CD14-positive monocyte (primary cell): ENCODE measurements at regions of chr2 and their contacts with region 1.

Region 1: GRCh38 chr2:27370026-27370815 is at the starts of genes EIF2B4 and SNX17:
- DNase-seq: peak; percentile 98 to 99 (median 99)
- H3K4me3 ChIP-seq: peak within 1 kb of the TSS; percentile 74 to 96 (median 83)
- H3K4me3 Mint-ChIP-seq: peak within 1 kb of the TSS; percentile 98 to 99
- H3K27ac ChIP-seq: peak within 1 kb of the TSS; percentile 93 to 96
- H3K27ac Mint-ChIP-seq: peak within 1 kb of the TSS; percentile 98 to 99 (median 99)
- H3K4me1 ChIP-seq: peaks cover 32 to 36% of the 10 kb centered on the region in 2 donors
- H3K4me1 Mint-ChIP-seq: peaks cover 36% of the 10 kb centered on the region
- H3K27me3 ChIP-seq: no peaks in the 10 kb centered on the region
- H3K27me3 Mint-ChIP-seq: no peaks in the 10 kb centered on the region
- CTCF ChIP-seq: peak; percentile 75
- polyA plus RNA-seq, gene EIF2B4: 29.5 to 42.3 (median 39.3) TPM
- polyA plus RNA-seq, gene SNX17: 86.6 to 338 (median 291) TPM

Region 2: DNA sequence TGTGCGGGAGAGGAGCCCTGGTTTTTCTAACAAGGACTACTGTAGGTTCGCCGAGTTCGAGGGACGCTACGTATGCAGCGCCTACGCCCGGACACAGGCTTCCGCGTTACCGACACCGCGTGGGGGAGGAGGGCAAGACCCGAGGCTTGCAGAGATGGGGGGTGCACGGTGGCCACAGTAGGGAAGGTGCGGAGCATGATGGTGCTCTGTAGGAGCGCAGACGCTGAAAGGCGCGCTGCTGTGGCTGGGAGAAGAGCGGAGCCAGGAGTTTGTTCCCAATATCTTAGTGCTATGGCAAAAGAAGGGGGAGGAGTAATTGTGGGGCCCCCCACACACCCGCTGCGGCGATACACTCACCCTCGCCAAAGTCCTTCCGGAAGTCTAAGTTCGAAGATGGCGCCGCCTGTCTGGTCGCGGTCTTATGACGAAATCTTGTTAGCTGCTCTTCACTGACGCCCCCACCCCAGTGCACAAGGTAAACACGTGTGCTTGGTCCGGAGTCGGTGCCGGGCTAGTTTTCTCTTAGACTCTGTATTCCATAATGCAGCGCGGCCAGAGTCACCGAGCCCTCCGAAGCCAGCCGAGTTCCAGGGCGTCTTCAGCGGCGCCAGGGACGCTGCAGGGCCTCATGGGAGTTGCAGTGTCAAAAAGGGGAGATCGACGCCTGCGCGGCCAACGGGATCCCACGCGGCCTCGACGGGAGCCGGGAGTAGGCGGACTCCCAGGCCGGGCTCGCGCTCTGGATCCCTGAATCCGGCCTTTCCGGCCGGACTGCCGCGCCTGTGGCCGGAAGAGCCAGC is 13.6 kb before region 1 on chr2 and contains the start of gene GTF3C2:
- intact Hi-C with region 1: loop called (anchors 1 to 2 kb)
- DNase-seq: peak; percentile 93 to 97 (median 94)
- H3K4me3 ChIP-seq: peak within 1 kb of the TSS; percentile 76 to 93 (median 90)
- H3K4me3 Mint-ChIP-seq: peak within 1 kb of the TSS; percentile 97 to 99
- H3K27ac ChIP-seq: peak within 1 kb of the TSS; percentile 90 to 95
- H3K27ac Mint-ChIP-seq: peak within 1 kb of the TSS; percentile 98 to 100 (median 99)
- H3K4me1 ChIP-seq: peaks cover 16 to 28% of the 10 kb centered on the region in 2 donors
- H3K4me1 Mint-ChIP-seq: peaks cover 37% of the 10 kb centered on the region
- H3K27me3 ChIP-seq: no peaks in the 10 kb centered on the region
- H3K27me3 Mint-ChIP-seq: no peaks in the 10 kb centered on the region
- CTCF ChIP-seq: no peak
- polyA plus RNA-seq, gene GTF3C2: 34.4 to 70.8 (median 41.7) TPM

Region 3: GRCh38 chr2:27380626-27381545 is 10.7 kb after region 1 on chr2 and contains the start of gene ZNF513:
- intact Hi-C with region 1: loop called (anchors 1 kb)
- DNase-seq: peak; percentile 94 to 95 (median 94)
- H3K4me3 ChIP-seq: peak within 1 kb of the TSS; percentile 67 to 78 (median 68)
- H3K4me3 Mint-ChIP-seq: peak within 1 kb of the TSS; percentile 86 to 91
- H3K27ac ChIP-seq: peak within 1 kb of the TSS; percentile 79 to 96
- H3K27ac Mint-ChIP-seq: peak within 1 kb of the TSS; percentile 93 to 98 (median 96)
- H3K4me1 ChIP-seq: peaks cover 18 to 38% of the 10 kb centered on the region in 2 donors
- H3K4me1 Mint-ChIP-seq: peaks cover 29% of the 10 kb centered on the region
- H3K27me3 ChIP-seq: no peaks in the 10 kb centered on the region
- H3K27me3 Mint-ChIP-seq: peaks cover 0 to 3% (median 1%) of the 10 kb centered on the region in 3 donors
- CTCF ChIP-seq: no peak
- polyA plus RNA-seq, gene ZNF513: 2.4 to 36.8 (median 2.6) TPM

Region 4: DNA sequence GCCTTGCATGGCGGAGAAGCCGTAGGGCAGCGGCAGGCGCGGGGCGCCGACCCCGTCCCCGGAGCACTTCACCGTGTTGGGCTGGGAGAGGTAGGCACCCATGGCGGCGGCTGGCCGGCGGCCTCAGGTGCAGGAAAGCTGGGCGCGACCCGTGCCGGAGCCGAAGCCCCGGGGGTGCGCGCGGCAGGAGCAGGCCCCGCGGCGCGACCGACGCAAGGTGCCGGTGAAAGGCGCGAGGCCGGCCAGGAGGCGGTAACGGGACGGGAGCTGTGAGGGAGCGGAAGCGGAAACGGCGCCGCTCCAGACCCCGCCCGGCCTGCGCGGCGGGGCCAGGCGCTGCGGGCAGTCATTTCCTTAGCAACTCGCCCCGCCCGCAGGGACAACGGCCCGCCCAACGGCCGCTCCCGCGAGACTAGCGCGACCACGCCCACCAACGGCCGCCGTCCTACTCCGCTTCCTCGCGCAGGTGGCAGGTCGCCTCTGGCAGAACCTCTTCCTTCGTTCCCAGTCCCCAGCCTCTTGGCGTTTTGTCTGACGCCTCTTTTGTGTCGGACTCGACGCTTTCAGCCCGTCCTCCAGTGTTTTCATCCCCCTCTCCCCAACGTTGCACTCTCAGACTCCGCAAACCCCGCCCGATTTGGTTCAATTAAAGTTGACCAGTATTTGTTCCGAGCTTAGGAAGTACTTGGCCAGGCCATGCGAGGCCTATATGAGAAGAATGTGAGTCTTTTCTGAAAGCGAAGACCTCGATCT is 39.3 kb after region 1 on chr2 and contains the start of gene PPM1G:
- intact Hi-C with region 1: loop called (anchors 5 kb)
- DNase-seq: peak; percentile 92 to 94 (median 93)
- H3K4me3 ChIP-seq: peak within 1 kb of the TSS; percentile 91 to 96 (median 96)
- H3K4me3 Mint-ChIP-seq: peak within 1 kb of the TSS; percentile 88 to 92
- H3K27ac ChIP-seq: peak within 1 kb of the TSS; percentile 74 to 85
- H3K27ac Mint-ChIP-seq: peak within 1 kb of the TSS; percentile 81 to 94 (median 89)
- H3K4me1 ChIP-seq: peaks cover 21% of the 10 kb centered on the region in 2 donors
- H3K4me1 Mint-ChIP-seq: peaks cover 29% of the 10 kb centered on the region
- H3K27me3 ChIP-seq: no peaks in the 10 kb centered on the region
- H3K27me3 Mint-ChIP-seq: peaks cover 2 to 9% (median 3%) of the 10 kb centered on the region in 3 donors
- CTCF ChIP-seq: no peak
- polyA plus RNA-seq, gene PPM1G: 31.9 to 54.3 (median 47.3) TPM

Region 5: DNA sequence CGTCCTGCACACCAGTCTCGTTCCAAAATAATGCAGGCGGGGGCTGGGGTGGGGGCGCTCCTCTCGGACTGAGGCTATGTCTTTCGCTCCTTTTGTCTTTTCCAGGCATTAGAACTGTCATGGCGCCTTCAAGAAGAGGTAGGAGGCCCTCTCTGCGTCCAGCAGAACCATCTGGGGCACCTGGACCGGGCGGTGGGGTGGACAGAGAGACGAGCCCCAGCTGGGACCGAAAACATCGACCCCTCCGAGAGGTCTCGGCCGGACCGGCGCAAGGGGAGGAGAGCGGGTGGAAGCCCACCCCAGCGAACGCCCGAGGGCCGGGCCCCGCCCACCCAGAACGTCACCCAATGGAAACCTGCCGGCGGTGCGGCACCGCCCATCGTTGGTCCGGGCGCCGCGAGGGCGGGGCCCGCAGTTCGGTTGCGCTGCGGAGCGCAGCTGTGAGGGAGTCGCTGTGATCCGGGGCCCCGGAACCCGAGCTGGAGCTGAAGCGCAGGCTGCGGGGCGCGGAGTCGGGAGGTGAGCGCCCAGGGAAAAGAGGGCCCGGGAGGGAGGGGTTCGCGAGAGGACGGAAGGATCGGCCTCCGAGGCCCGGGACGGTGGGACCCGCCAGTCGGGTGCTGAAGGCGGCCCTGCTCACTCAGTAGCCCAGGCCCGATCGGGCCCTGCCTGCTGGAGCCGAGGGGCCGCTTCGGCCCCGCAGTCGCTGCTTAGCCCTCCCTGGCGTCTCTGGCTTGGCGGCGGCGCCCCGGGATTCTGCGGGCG is 58.2 kb after region 1 on chr2 and contains the start of gene NRBP1:
- intact Hi-C with region 1: loop called (anchors 5 kb)
- DNase-seq: peak; percentile 80 to 83 (median 80)
- H3K4me3 ChIP-seq: peak within 1 kb of the TSS; percentile 64 to 98 (median 73)
- H3K4me3 Mint-ChIP-seq: peak within 1 kb of the TSS; percentile 96
- H3K27ac ChIP-seq: peak within 1 kb of the TSS; percentile 81 to 89
- H3K27ac Mint-ChIP-seq: peak within 1 kb of the TSS; percentile 90 to 97 (median 93)
- H3K4me1 ChIP-seq: peaks cover 19 to 28% of the 10 kb centered on the region in 2 donors
- H3K4me1 Mint-ChIP-seq: peaks cover 29% of the 10 kb centered on the region
- H3K27me3 ChIP-seq: no peaks in the 10 kb centered on the region
- H3K27me3 Mint-ChIP-seq: no peaks in the 10 kb centered on the region
- CTCF ChIP-seq: no peak
- polyA plus RNA-seq, gene NRBP1: 95.6 to 108 (median 102) TPM

Region 6: GRCh38 chr2:27489498-27490397 is 119.5 kb after region 1 on chr2 and contains the start of gene IFT172:
- intact Hi-C with region 1: loop called in 1 of 2 experiments (anchors 10 kb)
- DNase-seq: peak; percentile 98 to 99 (median 99)
- H3K4me3 ChIP-seq: peak within 1 kb of the TSS; percentile 52 to 80 (median 62)
- H3K4me3 Mint-ChIP-seq: peak within 1 kb of the TSS; percentile 81 to 92
- H3K27ac ChIP-seq: peak within 1 kb of the TSS in 1 of 2 donors; percentile 79
- H3K27ac Mint-ChIP-seq: peak within 1 kb of the TSS; percentile 77 to 93 (median 88)
- H3K4me1 ChIP-seq: peaks cover 16 to 22% of the 10 kb centered on the region in 2 donors
- H3K4me1 Mint-ChIP-seq: peaks cover 22% of the 10 kb centered on the region
- H3K27me3 ChIP-seq: peaks cover 14 to 16% of the 10 kb centered on the region in 2 donors
- H3K27me3 Mint-ChIP-seq: peaks cover 23 to 25% (median 24%) of the 10 kb centered on the region in 3 donors
- CTCF ChIP-seq: no peak
- polyA plus RNA-seq, gene IFT172: 1.7 to 12.8 (median 3.6) TPM